ENCODE measurements at regions of chr10 and their contacts with region 1.

Region 1: DNA sequence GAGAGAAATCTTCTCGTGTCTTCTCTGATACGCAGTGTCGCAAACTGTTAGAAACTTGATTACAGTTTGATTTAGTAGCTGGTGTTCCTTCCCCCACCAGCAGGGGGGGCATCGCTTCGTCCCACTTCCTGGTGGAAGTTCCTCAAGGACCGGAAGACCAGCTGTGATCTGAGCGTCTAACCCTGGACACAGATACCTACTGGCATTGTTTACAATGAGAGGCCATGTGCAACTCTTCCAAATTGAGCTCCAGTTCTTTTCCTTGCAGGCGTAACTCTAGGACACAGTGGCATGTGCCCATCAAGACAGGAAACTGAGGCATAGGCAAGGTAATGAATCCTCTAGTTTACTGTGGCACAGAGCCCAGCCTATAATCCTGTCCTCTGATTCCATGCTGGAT is 219.0 kb downstream of the CCDC3 start:
- DNase-seq: peak; percentile 47 to 49
- H3K4me3 ChIP-seq: no peak overlapping the region
- H3K27ac ChIP-seq: no peak overlapping the region
- H3K4me1 ChIP-seq: peaks cover 0 to 5% (median 0%) of the 10 kb centered on the region in 4 donors
- H3K27me3 ChIP-seq: no peaks in the 10 kb centered on the region
- CTCF ChIP-seq: peak in 4 of 7 experiments; percentile 65 to 74 (median 68)
- EP300 ChIP-seq: no peak
- POLR2A ChIP-seq: no peak

Region 2: DNA sequence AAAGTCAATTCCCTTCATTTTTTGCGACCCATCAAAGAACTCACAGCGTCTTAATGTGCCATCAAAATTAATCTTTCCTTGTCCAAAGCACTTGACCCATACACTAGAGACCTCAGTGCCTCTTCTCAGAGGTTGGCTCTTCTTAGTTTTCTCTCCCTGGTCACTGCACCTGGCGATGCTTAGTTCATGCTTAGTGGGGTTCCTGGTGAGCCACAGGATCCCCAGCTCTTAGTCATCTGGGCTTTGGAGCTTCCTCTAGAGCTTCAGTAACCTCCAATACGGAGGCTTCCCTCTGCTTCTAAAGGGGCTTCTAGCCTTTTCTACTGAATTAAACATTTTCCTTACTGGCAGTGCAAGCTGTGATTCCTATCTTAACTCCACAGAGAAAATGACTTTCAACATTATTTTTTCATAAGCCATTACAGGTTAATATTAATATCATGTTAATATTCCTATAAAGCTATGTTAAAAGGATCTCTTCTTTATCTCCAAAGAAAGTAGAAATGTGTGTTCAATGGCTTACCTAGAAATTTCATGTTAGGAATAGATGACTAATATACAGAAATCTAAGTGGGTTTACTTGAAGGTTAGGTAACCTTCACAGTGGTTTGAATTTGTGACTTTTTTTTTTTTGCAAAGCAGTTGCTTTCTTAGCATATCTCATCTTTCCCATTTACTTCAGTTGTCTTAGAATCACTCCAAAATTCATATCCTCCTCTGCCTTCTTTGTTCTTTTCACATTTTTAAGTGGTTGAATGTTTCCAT is 138.0 kb before region 1 on chr10:
- intact Hi-C with region 1: no loop called
- DNase-seq: no peak
- H3K4me3 ChIP-seq: no peak overlapping the region
- H3K27ac ChIP-seq: no peak overlapping the region
- H3K4me1 ChIP-seq: no peaks in the 10 kb centered on the region
- H3K27me3 ChIP-seq: no peaks in the 10 kb centered on the region
- CTCF ChIP-seq: no peak
- EP300 ChIP-seq: no peak
- POLR2A ChIP-seq: no peak

Region 3: GRCh38 chr10:12897278-12897677 is 114.7 kb after region 1 on chr10:
- intact Hi-C with region 1: loop called (anchors 10 kb)
- DNase-seq: no peak
- H3K4me3 ChIP-seq: no peak overlapping the region
- H3K27ac ChIP-seq: no peak overlapping the region
- H3K4me1 ChIP-seq: peaks cover 0 to 3% (median 0%) of the 10 kb centered on the region in 4 donors
- H3K27me3 ChIP-seq: no peaks in the 10 kb centered on the region
- CTCF ChIP-seq: no peak
- EP300 ChIP-seq: no peak
- POLR2A ChIP-seq: no peak